Sigmoid colon (tissue), 7 donors: ENCODE measurements at regions of chr3 and their contacts with region 1.

Region 1: GRCh38 chr3:182837855-182838454 is 44.7 kb downstream of the ATP11B start:
- DNase-seq: no peak
- H3K4me3 ChIP-seq: no peak overlapping the region
- H3K27ac ChIP-seq: no peak overlapping the region
- H3K4me1 ChIP-seq: no peaks in the 10 kb centered on the region
- H3K27me3 ChIP-seq: no peaks in the 10 kb centered on the region
- CTCF ChIP-seq: peak in 3 of 4 experiments; percentile 21 to 44 (median 32)
- EP300 ChIP-seq: no peak
- POLR2A ChIP-seq: no peak

Region 2: DNA sequence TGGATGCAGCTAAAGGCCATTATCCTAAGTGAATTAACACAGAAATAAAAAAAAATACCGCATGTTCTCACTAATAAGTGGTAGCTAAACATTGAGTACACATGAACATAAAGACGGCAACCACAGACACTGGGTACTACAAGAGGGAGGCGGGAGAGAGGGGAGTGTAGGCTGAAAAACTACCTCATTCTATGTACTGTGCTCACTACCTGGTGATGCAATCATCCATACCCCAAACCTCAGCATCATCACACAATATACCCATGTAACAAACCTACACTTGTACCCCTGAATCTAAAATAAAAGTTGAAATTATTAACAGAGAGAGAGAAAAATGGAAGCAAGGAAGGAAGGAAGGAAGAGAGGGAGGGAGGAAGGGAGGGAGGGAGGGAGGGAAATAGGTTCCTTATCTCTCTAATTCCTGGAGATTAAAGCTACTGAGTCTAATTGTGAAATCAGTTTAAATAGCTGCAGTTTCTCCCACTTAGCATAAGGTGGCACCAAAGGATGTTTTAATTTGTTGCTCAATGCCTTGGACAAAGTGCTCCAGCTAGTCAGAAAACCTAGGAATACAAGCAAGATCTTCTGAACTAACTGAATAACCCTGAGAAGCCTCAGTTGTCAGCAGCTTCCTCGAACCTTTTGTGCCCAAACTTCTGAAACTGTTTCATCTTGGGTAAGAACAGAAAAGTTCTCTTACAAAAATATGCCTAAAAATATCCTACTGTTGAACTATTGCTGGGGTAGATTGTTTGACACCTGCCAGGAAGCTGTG is 124.0 kb before region 1 on chr3:
- intact Hi-C with region 1: loop called (anchors 5 kb)
- DNase-seq: no peak
- H3K4me3 ChIP-seq: no peak overlapping the region
- H3K27ac ChIP-seq: no peak overlapping the region
- H3K4me1 ChIP-seq: no peaks in the 10 kb centered on the region
- H3K27me3 ChIP-seq: no peaks in the 10 kb centered on the region
- CTCF ChIP-seq: peak in 3 of 4 experiments; percentile 36 to 60 (median 53)
- EP300 ChIP-seq: no peak
- POLR2A ChIP-seq: no peak

Region 3: DNA sequence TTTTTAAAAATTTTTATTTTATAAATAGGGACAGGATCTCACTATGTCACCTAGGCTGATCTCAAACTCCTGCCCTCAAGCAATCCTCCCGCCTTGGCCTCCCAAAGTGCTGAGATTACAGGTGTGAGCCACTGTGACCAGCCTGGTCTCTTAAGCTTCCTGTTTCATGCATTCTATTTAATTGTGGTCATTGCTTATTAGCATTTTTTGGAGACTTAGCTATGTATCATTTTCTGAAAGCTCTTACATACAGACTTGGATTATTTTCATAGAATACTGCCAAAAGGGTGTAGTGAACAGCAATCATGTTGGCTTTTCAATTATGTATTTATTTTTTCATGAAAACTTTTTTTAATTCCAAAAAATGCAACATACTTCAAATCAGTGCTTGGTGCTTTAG is 193.9 kb after region 1 on chr3:
- intact Hi-C with region 1: no loop called
- DNase-seq: no peak
- H3K4me3 ChIP-seq: no peak overlapping the region
- H3K27ac ChIP-seq: no peak overlapping the region
- H3K4me1 ChIP-seq: no peaks in the 10 kb centered on the region
- H3K27me3 ChIP-seq: no peaks in the 10 kb centered on the region
- CTCF ChIP-seq: no peak
- EP300 ChIP-seq: no peak
- POLR2A ChIP-seq: no peak